ENCODE measurements at regions of chr14 and their contacts with region 1.

Region 1: DNA sequence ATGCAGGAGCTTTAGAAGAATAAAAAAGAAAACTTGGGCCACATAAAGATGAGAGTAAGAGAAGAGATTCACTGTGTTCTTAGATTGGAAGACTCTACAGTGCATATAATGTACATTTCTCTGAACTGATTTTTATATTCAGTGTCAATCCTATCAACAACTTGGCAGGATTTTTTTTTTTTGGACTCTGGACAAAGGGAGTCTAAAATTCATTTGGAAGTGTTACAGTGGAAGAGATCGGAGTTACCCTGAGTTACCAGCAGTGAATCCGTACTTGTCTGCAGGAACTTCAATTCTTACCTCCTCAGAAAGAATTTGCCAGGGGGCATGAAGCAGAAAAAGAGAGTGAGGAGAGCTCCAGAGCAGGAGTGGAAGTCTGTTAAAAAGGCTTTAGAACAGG is 24.0 kb downstream of the SERPINA11 start:
- DNase-seq: no peak
- H3K4me3 Mint-ChIP-seq: no peak overlapping the region
- H3K27ac Mint-ChIP-seq: no peak overlapping the region
- H3K4me1 Mint-ChIP-seq: no peaks in the 10 kb centered on the region
- H3K27me3 Mint-ChIP-seq: peaks cover 5% of the 10 kb centered on the region

Region 2: DNA sequence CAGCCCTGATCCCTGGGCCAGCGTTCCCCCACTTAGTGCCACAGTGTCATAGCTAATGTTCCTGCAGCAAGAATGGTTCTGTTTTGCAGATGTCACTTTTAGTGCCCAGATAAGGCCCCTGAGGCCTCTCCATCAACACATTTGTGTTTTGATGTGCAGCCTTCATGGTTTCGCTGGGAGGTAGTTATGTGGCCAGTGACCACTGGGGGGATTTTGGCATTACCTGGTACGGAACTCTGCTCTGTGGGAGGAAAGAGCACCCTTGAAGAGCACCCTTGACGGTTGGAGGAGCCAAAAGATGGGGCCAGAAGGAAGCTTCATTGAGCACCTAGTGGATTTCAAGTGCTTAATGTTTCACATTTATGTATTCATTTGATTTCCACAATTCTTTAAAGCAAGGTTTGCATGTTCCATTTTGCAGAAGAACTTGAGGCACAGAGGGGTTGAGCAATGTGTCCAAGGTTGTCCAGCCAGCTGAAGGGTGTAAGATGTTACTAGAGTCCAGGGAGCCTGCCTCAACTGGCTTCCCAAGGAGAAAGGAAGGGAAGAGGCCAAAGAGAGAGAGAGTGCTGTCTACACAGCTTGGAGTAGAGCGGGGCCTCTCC is 10.9 kb after region 1 on chr14:
- CTCF ChIA-PET with region 1: no interaction called
- DNase-seq: no peak
- H3K4me3 Mint-ChIP-seq: no peak overlapping the region
- H3K27ac Mint-ChIP-seq: no peak overlapping the region
- H3K4me1 Mint-ChIP-seq: no peaks in the 10 kb centered on the region
- H3K27me3 Mint-ChIP-seq: peaks cover 3% of the 10 kb centered on the region

Region 3: GRCh38 chr14:94548999-94549985 is 120.7 kb after region 1 on chr14:
- CTCF ChIA-PET with region 1: interaction called, 21 read pairs
- DNase-seq: peak; percentile 67
- H3K4me3 Mint-ChIP-seq: no peak overlapping the region
- H3K27ac Mint-ChIP-seq: no peak overlapping the region
- H3K4me1 Mint-ChIP-seq: no peaks in the 10 kb centered on the region
- H3K27me3 Mint-ChIP-seq: peaks cover 10% of the 10 kb centered on the region